Mammary epithelial cell (primary cell): ENCODE measurements at regions of chr22 and their contacts with region 1.

Region 1: GRCh38 chr22:32050678-32051515 is 7.8 kb downstream of the SLC5A1 start:
- DNase-seq: peak; percentile 99
- H3K4me3 ChIP-seq: no peak overlapping the region
- H3K27ac ChIP-seq: peak overlapping the region; percentile 79
- H3K4me1 ChIP-seq: peaks cover 16% of the 10 kb centered on the region
- H3K27me3 ChIP-seq: no peaks in the 10 kb centered on the region
- CTCF ChIP-seq: no peak

Region 2: DNA sequence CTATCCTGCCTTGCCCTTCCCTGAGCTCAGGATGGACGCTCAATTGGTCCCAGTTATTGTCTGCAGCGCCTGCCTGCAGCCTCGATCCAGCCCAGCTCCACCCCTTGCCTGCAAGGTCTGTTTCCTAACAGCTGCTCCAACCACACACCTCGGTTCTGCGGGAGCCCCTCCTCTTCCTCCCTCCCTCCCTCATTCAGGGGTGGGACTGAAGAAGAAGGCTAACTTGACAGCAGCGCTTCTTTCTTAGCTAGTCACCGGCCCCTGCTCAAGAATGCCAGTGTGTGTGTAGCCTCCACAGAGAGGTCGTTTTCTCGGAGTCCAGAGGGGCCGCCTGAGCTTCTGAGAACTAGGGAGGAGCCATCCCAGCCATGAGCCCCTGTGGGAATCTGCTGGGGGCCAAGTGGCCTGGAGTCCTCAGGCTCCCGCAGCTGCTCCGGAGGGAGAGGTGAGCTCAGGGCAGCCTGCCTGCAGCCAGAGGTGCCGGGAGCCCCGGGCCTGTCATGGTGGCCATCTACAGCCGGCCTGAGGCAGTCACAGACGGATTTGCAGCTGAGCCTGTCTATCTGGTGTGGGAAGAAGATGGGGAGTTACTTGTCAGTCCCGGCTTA is 802.7 kb before region 1 on chr22:
- CTCF ChIA-PET with region 1: no interaction called
- dilution Hi-C with region 1: no loop called
- in situ Hi-C with region 1: no loop called
- intact Hi-C with region 1: no loop called
- DNase-seq: peak; percentile 92
- H3K4me3 ChIP-seq: peak overlapping the region; percentile 70 to 94 (median 82)
- H3K27ac ChIP-seq: peak overlapping the region; percentile 86
- H3K4me1 ChIP-seq: peaks cover 55% of the 10 kb centered on the region
- H3K27me3 ChIP-seq: no peaks in the 10 kb centered on the region
- CTCF ChIP-seq: no peak

Region 3: DNA sequence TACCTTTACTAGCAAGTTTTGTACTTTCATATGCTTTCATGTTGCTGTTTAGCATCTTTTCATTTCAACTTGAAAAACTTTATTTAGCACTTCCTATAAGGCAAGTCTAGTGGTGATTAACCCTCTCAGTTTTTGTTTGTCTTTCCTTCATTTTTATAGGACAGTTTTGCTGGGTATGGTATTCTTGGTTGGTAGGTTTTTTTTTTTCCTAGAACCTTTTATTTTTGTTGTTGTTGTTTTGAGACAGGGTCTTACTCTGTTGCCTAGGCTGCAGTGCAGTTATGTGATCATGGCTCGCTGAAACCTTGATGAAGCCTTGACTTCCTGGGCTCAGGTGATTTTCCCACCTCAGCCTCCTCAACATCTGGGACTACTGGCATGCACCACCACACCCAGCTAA is 37.7 kb before region 1 on chr22:
- CTCF ChIA-PET with region 1: no interaction called
- dilution Hi-C with region 1: loop called (anchors 5 kb)
- in situ Hi-C with region 1: no loop called
- intact Hi-C with region 1: no loop called
- DNase-seq: no peak
- H3K4me3 ChIP-seq: no peak overlapping the region
- H3K27ac ChIP-seq: no peak overlapping the region
- H3K4me1 ChIP-seq: peaks cover 2% of the 10 kb centered on the region
- H3K27me3 ChIP-seq: no peaks in the 10 kb centered on the region
- CTCF ChIP-seq: no peak

Region 4: GRCh38 chr22:32020117-32020516 is 30.8 kb before region 1 on chr22:
- CTCF ChIA-PET with region 1: no interaction called
- dilution Hi-C with region 1: no loop called
- in situ Hi-C with region 1: no loop called
- intact Hi-C with region 1: loop called (anchors 1 kb)
- DNase-seq: peak; percentile 100
- H3K4me3 ChIP-seq: no peak overlapping the region
- H3K27ac ChIP-seq: peak overlapping the region; percentile 79
- H3K4me1 ChIP-seq: peaks cover 19% of the 10 kb centered on the region
- H3K27me3 ChIP-seq: no peaks in the 10 kb centered on the region
- CTCF ChIP-seq: no peak

Region 5: DNA sequence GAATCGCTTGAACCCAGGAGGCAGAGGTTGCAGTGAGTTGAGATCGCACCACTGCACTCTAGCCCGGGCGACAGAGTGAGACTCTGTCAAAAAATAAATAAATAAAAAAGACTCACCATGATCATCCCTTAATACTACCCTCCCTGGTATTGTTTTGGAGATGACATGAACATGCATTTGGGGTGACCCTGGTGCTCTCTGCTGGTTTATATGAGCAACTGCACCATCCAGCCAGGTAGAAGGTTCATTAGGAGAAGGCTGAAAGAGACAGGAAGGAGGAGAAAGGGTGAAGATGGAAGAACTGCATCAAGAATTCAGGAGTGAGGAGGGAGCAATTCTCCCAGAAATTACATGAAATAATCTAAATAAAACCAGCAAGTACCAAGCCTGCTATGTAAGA is 30.0 kb after region 1 on chr22:
- CTCF ChIA-PET with region 1: interaction called, 3 read pairs
- dilution Hi-C with region 1: no loop called
- in situ Hi-C with region 1: no loop called
- intact Hi-C with region 1: loop called (anchors 2 kb)
- DNase-seq: peak; percentile 66
- H3K4me3 ChIP-seq: no peak overlapping the region
- H3K27ac ChIP-seq: no peak overlapping the region
- H3K4me1 ChIP-seq: peaks cover 12% of the 10 kb centered on the region
- H3K27me3 ChIP-seq: no peaks in the 10 kb centered on the region
- CTCF ChIP-seq: peak; percentile 89 to 93